ENCODE measurements at regions of chr9 and their contacts with region 1.

Region 1: DNA sequence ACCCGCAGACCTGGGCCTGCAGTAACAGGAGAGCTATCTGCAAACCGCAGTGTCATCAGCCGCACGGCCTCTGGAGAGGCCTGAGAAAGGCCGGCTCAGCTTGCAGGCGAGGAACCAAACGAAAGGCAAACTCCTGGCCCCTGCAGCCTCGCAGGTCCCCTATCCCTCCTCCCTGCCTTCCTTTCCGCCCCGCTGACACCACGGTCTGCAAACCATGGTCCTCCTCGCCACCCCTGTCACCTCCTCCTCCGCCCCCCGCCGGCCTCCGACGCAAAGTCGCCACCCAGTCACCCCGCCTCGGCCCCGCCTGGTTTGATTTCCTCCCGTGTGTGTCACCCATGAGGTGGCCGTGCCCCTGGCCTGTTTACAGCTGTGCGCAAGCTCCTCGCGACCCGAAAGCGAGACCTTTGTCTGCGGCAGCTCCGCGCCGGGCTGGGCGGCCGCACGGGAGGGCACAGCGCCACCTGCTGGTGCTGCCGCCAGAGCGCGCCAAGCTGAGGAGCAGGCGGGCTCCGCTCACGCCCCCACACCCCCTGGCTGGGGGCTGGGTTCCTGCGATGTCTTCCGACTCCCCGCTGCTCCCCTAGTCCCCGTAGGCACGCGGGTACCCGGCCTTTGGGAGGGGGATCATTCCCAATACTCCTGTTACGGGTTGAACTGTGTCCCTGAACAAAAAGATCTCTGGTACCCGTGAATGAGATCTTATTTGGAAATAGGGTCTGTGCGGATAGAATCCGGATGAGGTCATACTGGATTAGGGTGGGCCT is 19.4 kb downstream of the GBGT1 start:
- DNase-seq: peak; percentile 80 to 93
- H3K4me3 ChIP-seq: peak overlapping the region; percentile 29; the same call in 1 of the 2 replicates
- H3K27ac ChIP-seq: no peak overlapping the region
- H3K4me1 ChIP-seq: peaks cover 32% of the 10 kb centered on the region
- H3K27me3 ChIP-seq: no peaks in the 10 kb centered on the region
- CTCF ChIP-seq: peak; percentile 97

Region 2: DNA sequence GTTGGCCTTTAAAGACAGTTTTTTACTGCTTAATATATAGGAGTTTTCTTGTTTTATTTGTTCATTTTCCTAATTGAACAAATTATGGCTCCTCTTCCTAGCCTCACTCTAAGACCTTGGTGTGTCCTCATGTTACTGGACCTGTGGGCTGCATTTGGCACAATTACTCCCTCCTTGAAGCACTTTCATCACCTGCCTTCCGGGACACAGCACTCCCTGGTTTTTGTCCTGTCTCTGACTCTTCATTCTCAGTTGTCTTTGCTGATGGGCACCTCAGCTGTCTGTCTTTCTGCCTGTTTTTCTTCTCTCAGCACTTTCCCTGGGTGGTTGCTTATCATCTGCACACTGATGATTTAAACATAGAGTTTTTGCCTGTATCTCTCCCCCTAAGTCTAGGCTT is 460.4 kb before region 1 on chr9:
- CTCF ChIA-PET with region 1: no interaction called
- POLR2A ChIA-PET with region 1: no interaction called
- intact Hi-C with region 1: no loop called
- DNase-seq: no peak
- H3K4me3 ChIP-seq: no peak overlapping the region
- H3K27ac ChIP-seq: no peak overlapping the region
- H3K4me1 ChIP-seq: no peaks in the 10 kb centered on the region
- H3K27me3 ChIP-seq: no peaks in the 10 kb centered on the region
- CTCF ChIP-seq: no peak

Region 3: GRCh38 chr9:133041958-133042357 is 102.4 kb before region 1 on chr9:
- CTCF ChIA-PET with region 1: no interaction called
- POLR2A ChIA-PET with region 1: no interaction called
- intact Hi-C with region 1: loop called (anchors 1 kb)
- DNase-seq: no peak
- H3K4me3 ChIP-seq: no peak overlapping the region
- H3K27ac ChIP-seq: no peak overlapping the region
- H3K4me1 ChIP-seq: no peaks in the 10 kb centered on the region
- H3K27me3 ChIP-seq: no peaks in the 10 kb centered on the region
- CTCF ChIP-seq: no peak

Region 4: DNA sequence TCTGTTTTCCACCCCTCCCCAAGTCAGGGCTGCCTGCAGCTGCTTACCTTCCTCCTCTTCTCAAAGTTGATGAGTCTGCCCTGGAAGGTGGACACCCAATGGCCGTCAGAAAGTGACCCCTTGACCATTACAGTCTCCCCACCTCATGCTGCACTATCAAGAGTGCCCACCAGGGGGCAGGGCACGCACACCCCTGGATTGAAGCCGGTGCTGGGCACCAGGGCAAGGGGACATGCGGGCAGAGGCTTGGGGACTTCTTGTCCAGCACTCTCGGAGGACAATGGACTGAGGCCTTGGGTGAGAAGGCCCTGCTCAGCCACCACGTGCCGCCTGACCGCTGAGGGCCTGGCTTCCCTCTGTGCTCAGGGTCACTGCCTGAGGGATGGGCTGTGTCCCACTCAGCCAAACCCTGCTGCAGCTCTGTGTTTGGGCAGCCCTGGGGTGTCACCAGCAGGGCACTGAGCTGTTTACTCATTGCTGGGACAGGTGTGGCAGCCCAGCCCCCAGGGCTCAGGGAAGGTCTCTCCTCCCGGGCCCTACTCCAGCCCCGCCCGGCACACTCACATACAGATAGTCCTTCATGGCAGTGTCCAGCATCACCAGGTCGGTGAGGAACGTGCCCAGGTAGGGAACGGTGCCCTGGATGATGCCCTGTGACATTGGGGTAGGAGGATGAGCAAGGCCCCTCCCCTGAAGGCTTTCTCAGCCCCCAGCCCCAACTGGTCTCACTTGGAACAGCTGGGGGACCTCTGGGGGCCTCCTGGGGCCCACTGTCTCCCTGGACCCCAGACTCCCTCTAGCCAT is 40.9 kb before region 1 on chr9:
- CTCF ChIA-PET with region 1: interaction called, 36 read pairs
- POLR2A ChIA-PET with region 1: no interaction called
- intact Hi-C with region 1: loop called (anchors 1 kb)
- DNase-seq: peak; percentile 72 to 87
- H3K4me3 ChIP-seq: no peak overlapping the region
- H3K27ac ChIP-seq: no peak overlapping the region
- H3K4me1 ChIP-seq: peaks cover 12% of the 10 kb centered on the region
- H3K27me3 ChIP-seq: no peaks in the 10 kb centered on the region
- CTCF ChIP-seq: peak; percentile 99

Region 5: GRCh38 chr9:133115448-133116345 is 28.6 kb before region 1 on chr9:
- CTCF ChIA-PET with region 1: interaction called, 15 read pairs
- POLR2A ChIA-PET with region 1: interaction called, 27 read pairs
- intact Hi-C with region 1: no loop called
- DNase-seq: no peak
- H3K4me3 ChIP-seq: no peak overlapping the region
- H3K27ac ChIP-seq: no peak overlapping the region
- H3K4me1 ChIP-seq: peaks cover 17% of the 10 kb centered on the region
- H3K27me3 ChIP-seq: no peaks in the 10 kb centered on the region
- CTCF ChIP-seq: no peak

Region 6: DNA sequence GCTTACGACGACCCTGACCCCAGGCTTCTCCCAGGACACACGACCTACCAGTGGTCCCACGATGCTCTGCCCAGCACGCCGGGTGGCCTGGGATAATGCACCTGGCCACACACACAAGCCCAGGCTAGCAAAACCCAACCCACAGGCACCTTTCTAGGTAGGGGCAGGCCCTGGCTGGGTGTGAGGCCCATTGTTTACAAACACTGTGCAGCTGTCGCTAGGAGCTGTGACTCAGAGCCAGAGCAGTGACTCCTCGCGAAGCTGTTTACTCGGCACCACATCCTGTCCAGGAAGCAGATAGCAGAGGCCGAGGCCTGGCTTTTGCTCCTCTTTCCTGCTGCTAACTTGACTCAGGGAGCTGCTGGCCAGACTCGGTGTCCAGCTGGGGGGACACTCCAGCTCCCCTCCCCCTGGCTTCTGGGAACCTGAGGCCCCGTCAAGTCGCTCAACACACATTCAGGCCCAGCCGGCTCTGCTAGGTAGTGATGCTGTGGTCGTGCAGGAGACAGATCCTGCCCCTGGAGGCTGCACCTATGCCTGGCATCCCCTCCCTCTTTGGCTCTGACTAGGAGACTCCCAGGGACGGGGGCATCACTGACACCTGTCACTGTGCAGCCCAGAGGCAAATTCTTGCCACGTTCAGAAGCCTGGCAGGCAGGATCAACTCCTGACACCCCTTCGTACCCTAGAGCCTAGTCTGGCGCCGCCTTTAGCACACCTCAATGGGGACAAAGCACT is 10.5 kb before region 1 on chr9:
- CTCF ChIA-PET with region 1: interaction called, 25 read pairs
- POLR2A ChIA-PET with region 1: interaction called, 6 read pairs
- intact Hi-C with region 1: loop called (anchors 1 kb)
- DNase-seq: peak; percentile 97 to 98
- H3K4me3 ChIP-seq: no peak overlapping the region; the same call in 1 of the 2 replicates
- H3K27ac ChIP-seq: peak overlapping the region; percentile 70
- H3K4me1 ChIP-seq: peaks cover 47% of the 10 kb centered on the region
- H3K27me3 ChIP-seq: no peaks in the 10 kb centered on the region
- CTCF ChIP-seq: no peak

Region 7: DNA sequence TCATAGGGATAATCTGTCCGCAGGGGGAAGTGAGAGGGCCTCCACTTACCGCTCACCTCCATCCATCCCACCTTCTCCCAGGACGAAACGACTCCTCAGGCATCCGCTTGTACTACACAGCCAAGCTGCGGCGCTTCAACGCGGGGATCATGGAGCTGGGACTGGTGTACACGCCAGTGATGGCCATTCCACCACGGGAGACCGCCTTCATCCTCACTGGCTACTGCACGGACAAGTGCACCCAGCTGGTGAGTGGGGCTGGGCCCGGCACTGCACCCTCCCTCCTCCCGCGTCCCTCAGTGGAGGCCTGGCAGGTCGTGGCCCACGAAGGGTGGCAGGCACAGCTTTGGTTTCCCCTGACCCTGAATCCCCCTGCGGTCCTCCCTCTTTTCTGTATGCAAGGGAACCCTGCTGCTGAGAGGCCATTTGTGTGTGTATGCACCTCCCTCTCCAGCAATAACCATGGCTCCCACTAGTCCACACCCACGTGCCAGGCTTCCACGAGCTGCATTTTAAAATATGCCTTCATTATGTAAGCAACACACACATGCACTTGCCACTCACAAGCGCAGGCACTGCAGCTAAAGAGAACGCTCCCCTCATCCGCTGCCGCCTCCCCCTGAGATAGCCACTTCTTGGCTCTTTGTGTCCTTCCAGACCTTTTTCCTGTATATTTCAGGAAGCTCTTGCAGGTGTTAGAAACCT is 503.6 kb after region 1 on chr9:
- CTCF ChIA-PET with region 1: no interaction called
- POLR2A ChIA-PET with region 1: no interaction called
- intact Hi-C with region 1: no loop called
- DNase-seq: no peak
- H3K4me3 ChIP-seq: no peak overlapping the region
- H3K27ac ChIP-seq: no peak overlapping the region
- H3K4me1 ChIP-seq: no peaks in the 10 kb centered on the region
- H3K27me3 ChIP-seq: peaks cover 98% of the 10 kb centered on the region
- CTCF ChIP-seq: no peak